ENCODE measurements at regions of chr5 and their contacts with region 1.

Region 1: GRCh38 chr5:16934123-16934522 is 2.0 kb downstream of the MYO10 start:
- DNase-seq: peak; percentile 80
- H3K4me3 ChIP-seq: peak overlapping the region; percentile 68 to 91 (median 75)
- H3K27ac ChIP-seq: peak overlapping the region in 2 of 8 donors; percentile 83 to 87
- H3K4me1 ChIP-seq: peaks cover 0 to 69% (median 41%) of the 10 kb centered on the region in 6 donors
- H3K27me3 ChIP-seq: peaks cover 0 to 66% (median 18%) of the 10 kb centered on the region in 7 donors
- CTCF ChIP-seq: peak; percentile 27 to 81 (median 69)
- POLR2A ChIP-seq: no peak

Region 2: GRCh38 chr5:16791036-16791705 is 143.0 kb before region 1 on chr5:
- intact Hi-C with region 1: loop called (anchors 5 kb)
- DNase-seq: no peak
- H3K4me3 ChIP-seq: no peak overlapping the region
- H3K27ac ChIP-seq: no peak overlapping the region
- H3K4me1 ChIP-seq: peaks cover 0 to 10% (median 5%) of the 10 kb centered on the region in 6 donors
- H3K27me3 ChIP-seq: no peaks in the 10 kb centered on the region
- CTCF ChIP-seq: peak in 10 of 11 experiments; percentile 5 to 71 (median 62)
- POLR2A ChIP-seq: no peak

Region 3: DNA sequence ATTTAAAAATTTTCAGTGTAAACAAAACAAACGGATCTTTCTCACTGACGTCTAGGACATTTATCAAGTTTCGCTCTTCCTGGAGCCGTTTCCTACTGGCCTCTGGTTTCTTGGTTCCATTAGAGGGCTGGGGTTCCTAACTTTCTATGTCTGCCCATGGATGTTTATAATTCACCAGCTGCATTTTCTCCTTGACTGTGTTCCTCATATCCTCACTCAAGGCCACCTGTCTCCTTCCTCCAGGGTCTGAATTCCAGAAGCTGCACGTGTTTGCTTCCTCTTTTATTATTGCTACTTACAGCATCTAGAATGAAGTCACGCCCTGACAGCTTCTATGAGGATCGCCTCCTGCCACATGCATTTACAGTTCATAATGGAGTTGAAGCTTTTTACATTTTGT is 209.2 kb after region 1 on chr5:
- intact Hi-C with region 1: loop called (anchors 10 kb)
- DNase-seq: no peak
- H3K4me3 ChIP-seq: no peak overlapping the region
- H3K27ac ChIP-seq: peak overlapping the region in 1 of 8 donors; percentile 28
- H3K4me1 ChIP-seq: no peaks in the 10 kb centered on the region
- H3K27me3 ChIP-seq: no peaks in the 10 kb centered on the region
- CTCF ChIP-seq: no peak
- POLR2A ChIP-seq: no peak

Region 4: GRCh38 chr5:17189381-17190036 is 255.4 kb after region 1 on chr5:
- intact Hi-C with region 1: loop called (anchors 5 kb)
- DNase-seq: peak; percentile 87
- H3K4me3 ChIP-seq: no peak overlapping the region
- H3K27ac ChIP-seq: peak overlapping the region in 6 of 8 donors; percentile 2 to 49 (median 23)
- H3K4me1 ChIP-seq: peaks cover 10 to 23% (median 16%) of the 10 kb centered on the region in 6 donors
- H3K27me3 ChIP-seq: no peaks in the 10 kb centered on the region
- CTCF ChIP-seq: peak; percentile 52 to 84 (median 72)
- POLR2A ChIP-seq: no peak

Region 5: DNA sequence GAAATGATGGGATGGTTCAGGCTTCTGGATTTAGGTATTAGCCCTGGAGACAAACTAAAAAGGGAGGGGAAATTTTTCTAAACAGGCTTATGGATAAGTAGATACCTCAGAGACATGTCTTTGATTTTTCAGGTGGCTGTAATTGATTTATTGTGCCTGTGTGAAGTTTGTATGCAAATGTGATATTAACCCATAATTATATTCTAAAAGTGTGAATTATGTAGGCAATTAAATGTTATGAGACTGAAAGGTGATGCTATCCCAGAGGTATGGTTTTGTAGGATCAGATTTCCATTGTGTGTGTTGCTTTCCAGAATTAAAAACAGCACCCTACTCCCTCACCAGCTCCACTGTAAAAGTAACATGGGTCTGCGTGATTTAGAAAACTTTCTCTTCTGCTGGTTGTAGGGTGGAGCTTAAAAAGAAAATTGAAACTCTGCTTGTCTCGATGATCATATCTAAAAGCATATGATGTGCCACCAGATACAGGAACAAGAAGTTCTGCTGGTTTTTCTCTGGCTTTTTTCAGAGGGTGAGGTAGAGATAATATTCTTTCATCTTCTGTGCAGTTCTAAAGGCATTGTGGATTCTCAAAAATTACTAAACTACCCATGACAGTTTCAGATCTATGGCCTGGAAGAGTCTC is 492.1 kb after region 1 on chr5:
- intact Hi-C with region 1: no loop called
- DNase-seq: no peak
- H3K4me3 ChIP-seq: no peak overlapping the region
- H3K27ac ChIP-seq: no peak overlapping the region
- H3K4me1 ChIP-seq: peaks cover 0 to 5% (median 0%) of the 10 kb centered on the region in 6 donors
- H3K27me3 ChIP-seq: no peaks in the 10 kb centered on the region
- CTCF ChIP-seq: no peak
- POLR2A ChIP-seq: no peak